Aorta (tissue), 5 donors: ENCODE measurements at regions of chr4 and their contacts with region 1.

Region 1: DNA sequence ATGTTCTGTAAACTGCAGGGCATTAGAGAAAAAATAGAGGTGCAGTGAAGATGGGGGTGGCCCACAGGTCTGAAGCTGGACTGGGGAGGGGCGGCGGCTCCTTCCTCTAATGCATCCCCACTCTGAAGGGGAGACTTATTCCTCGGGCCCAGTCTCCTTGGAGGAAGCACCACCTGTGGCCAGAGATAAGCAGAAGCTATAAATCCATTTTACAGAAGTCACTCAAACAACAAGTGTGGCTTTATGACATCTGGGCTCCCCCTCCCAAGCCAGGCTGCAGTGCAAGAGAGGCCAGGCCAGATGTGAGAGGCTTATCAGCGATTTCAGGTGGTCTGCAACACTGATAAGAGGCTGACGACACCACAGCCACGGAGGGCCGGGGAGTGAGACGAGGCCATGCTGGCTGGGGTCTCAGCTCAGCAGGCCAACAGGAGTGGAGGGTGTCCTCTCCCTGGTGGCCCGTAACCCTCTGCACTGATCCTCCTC is 15.8 kb downstream of the CYTL1 start:
- DNase-seq: no peak
- ATAC-seq: no peak
- H3K4me3 ChIP-seq: no peak overlapping the region
- H3K27ac ChIP-seq: no peak overlapping the region
- H3K4me1 ChIP-seq: no peaks in the 10 kb centered on the region
- H3K27me3 ChIP-seq: no peaks in the 10 kb centered on the region

Region 2: GRCh38 chr4:5142726-5143125 is 139.3 kb after region 1 on chr4:
- intact Hi-C with region 1: loop called in 1 of 2 experiments (anchors 10 kb)
- DNase-seq: no peak
- ATAC-seq: no peak
- H3K4me3 ChIP-seq: no peak overlapping the region
- H3K27ac ChIP-seq: no peak overlapping the region
- H3K4me1 ChIP-seq: no peaks in the 10 kb centered on the region
- H3K27me3 ChIP-seq: no peaks in the 10 kb centered on the region

Region 3: GRCh38 chr4:5206016-5206790 is 202.8 kb after region 1 on chr4:
- intact Hi-C with region 1: no loop called
- DNase-seq: no peak
- ATAC-seq: no peak
- H3K4me3 ChIP-seq: no peak overlapping the region
- H3K27ac ChIP-seq: no peak overlapping the region
- H3K4me1 ChIP-seq: no peaks in the 10 kb centered on the region
- H3K27me3 ChIP-seq: no peaks in the 10 kb centered on the region

Region 4: GRCh38 chr4:5249727-5250126 is 246.3 kb after region 1 on chr4:
- intact Hi-C with region 1: no loop called
- DNase-seq: no peak
- ATAC-seq: no peak
- H3K4me3 ChIP-seq: no peak overlapping the region
- H3K27ac ChIP-seq: no peak overlapping the region
- H3K4me1 ChIP-seq: no peaks in the 10 kb centered on the region
- H3K27me3 ChIP-seq: no peaks in the 10 kb centered on the region